ENCODE measurements at regions of chr6 and their contacts with region 1.

Region 1: GRCh38 chr6:1604158-1605030 is 5.3 kb upstream of the FOXC1 start:
- DNase-seq: peak in 4 of 5 donors; percentile 67 to 89 (median 75)
- ATAC-seq: peak; percentile 73 to 95 (median 88)
- H3K4me3 ChIP-seq: peak overlapping the region; percentile 12 to 66 (median 54)
- H3K27ac ChIP-seq: no peak overlapping the region
- H3K4me1 ChIP-seq: peaks cover 0 to 35% (median 13%) of the 10 kb centered on the region in 12 donors
- H3K27me3 ChIP-seq: peaks cover 33 to 94% (median 70%) of the 10 kb centered on the region in 9 donors
- CTCF ChIP-seq: peak; percentile 88 to 100 (median 98)
- POLR2A ChIP-seq: no peak

Region 2: GRCh38 chr6:1729133-1729749 is 124.8 kb after region 1 on chr6:
- intact Hi-C with region 1: no loop called
- DNase-seq: no peak
- ATAC-seq: no peak
- H3K4me3 ChIP-seq: no peak overlapping the region
- H3K27ac ChIP-seq: no peak overlapping the region
- H3K4me1 ChIP-seq: peaks cover 0 to 9% (median under 1%) of the 10 kb centered on the region in 12 donors
- H3K27me3 ChIP-seq: no peaks in the 10 kb centered on the region
- CTCF ChIP-seq: no peak
- POLR2A ChIP-seq: no peak

Region 3: DNA sequence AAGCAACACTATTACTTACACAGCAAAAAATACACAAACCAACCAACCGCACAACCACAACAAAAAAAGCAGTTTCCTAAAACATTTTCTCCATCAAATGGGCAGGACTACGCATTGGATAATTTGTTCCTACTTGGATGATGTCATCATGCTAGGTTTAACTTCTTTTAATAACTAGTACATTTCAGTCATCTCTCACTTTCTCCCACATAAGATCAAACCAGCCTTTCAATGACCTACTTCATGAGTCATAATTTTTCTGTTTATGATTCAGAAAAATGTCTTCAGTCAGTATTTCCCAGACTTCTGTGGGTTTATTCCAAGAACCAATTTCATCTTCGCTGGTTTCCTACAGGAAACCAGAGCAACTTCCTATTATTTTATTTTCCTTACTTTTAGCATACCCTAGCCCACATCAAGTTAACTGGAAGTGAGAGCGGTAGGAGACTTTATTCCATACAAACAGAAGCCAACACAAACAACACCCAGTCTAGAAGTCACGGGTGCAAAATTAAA is 506.8 kb after region 1 on chr6:
- intact Hi-C with region 1: loop called in 1 of 10 experiments (anchors 5 kb)
- DNase-seq: no peak
- ATAC-seq: peak in 3 of 4 donors; percentile 56 to 82 (median 66)
- H3K4me3 ChIP-seq: peak overlapping the region in 4 of 12 donors; percentile 1 to 23 (median 19)
- H3K27ac ChIP-seq: peak overlapping the region in 5 of 12 donors; percentile 12 to 74 (median 18)
- H3K4me1 ChIP-seq: peaks cover 0 to 18% (median 5%) of the 10 kb centered on the region in 12 donors
- H3K27me3 ChIP-seq: no peaks in the 10 kb centered on the region
- CTCF ChIP-seq: no peak
- POLR2A ChIP-seq: no peak

Region 4: DNA sequence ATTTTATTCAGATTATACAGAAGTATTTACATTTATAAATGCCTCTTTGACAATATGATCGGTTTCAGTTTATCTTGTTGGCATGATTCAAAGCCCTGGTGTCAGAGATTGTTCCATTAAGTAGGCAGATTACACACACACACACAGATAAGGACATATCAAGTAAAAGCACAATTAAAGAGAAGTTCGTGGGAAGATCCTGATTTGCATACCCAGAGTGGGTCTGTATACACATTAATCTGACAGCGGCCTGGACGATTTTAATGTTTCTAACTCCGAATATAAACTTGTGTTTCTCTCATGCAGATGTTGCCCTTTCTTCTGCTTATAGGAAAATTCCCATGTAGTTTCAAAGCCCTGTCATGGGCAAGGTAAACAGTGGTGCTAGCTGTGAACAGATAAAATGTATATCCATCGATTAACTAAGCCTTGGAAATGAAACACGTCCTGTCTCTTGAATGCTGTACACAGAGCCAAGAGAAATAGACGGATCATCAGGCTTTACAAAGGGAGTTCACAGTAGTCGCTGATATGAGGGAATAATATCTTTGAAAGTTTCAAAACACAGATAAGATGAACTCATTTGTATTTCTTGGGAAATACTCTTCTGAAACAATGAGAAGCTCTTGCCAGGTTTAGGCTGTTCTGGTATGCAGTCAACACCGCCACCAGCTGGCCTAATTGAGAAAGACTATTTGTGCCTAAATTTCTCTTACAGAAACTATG is 749.2 kb after region 1 on chr6:
- intact Hi-C with region 1: loop called in 4 of 10 experiments (anchors 2 to 5 kb)
- DNase-seq: peak in 4 of 5 donors; percentile 44 to 59 (median 49)
- ATAC-seq: peak in 3 of 4 donors; percentile 75 to 87 (median 84)
- H3K4me3 ChIP-seq: peak overlapping the region in 1 of 12 donors; percentile 17
- H3K27ac ChIP-seq: peak overlapping the region in 1 of 12 donors; percentile 30
- H3K4me1 ChIP-seq: peaks cover 0 to 11% (median 5%) of the 10 kb centered on the region in 12 donors
- H3K27me3 ChIP-seq: no peaks in the 10 kb centered on the region
- CTCF ChIP-seq: peak; percentile 64 to 89 (median 80)
- POLR2A ChIP-seq: no peak

Region 5: GRCh38 chr6:2641044-2641725 is 1036.8 kb after region 1 on chr6:
- intact Hi-C with region 1: loop called in 2 of 10 experiments (anchors 5 kb)
- DNase-seq: no peak
- ATAC-seq: no peak
- H3K4me3 ChIP-seq: no peak overlapping the region
- H3K27ac ChIP-seq: no peak overlapping the region
- H3K4me1 ChIP-seq: no peaks in the 10 kb centered on the region
- H3K27me3 ChIP-seq: peaks cover 0 to 19% (median 0%) of the 10 kb centered on the region in 9 donors
- CTCF ChIP-seq: no peak
- POLR2A ChIP-seq: no peak

Region 6: DNA sequence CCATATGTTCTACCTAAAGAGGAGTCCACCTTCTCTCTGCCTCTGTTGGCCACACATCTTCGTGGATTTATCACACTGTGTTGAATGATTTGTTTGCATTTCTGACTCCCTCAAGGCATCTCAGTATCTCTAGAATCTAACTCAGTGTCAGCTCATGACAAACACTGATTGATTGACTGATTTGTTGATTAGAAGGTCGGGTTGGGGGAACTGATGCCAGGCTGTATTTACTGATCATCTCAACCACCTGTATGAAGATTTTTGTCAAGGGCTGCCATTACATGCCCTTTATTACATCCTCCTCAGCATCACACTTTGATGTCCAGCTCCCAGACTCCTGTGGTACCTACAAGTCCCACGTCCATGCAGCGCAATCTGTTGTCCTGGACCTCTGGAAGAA is 1099.6 kb after region 1 on chr6:
- intact Hi-C with region 1: loop called in 6 of 10 experiments (anchors 5 to 10 kb)
- DNase-seq: no peak
- ATAC-seq: no peak
- H3K4me3 ChIP-seq: no peak overlapping the region
- H3K27ac ChIP-seq: no peak overlapping the region
- H3K4me1 ChIP-seq: no peaks in the 10 kb centered on the region
- H3K27me3 ChIP-seq: no peaks in the 10 kb centered on the region
- CTCF ChIP-seq: no peak
- POLR2A ChIP-seq: no peak

Measured in heart left ventricle (tissue), 16 donors.